ENCODE measurements at regions of chr11 and their contacts with region 1.

Region 1: GRCh38 chr11:86802601-86803051 is 2.3 kb downstream of the PRSS23 start:
- DNase-seq: peak in 1 of 2 donors; percentile 43
- ATAC-seq: peak in 2 of 3 donors; percentile 27 to 32
- H3K4me3 ChIP-seq: peak overlapping the region; percentile 75
- H3K4me3 Mint-ChIP-seq: peak overlapping the region; percentile 96
- H3K27ac ChIP-seq: peak overlapping the region; percentile 10
- H3K27ac Mint-ChIP-seq: peak overlapping the region; percentile 88 to 95
- H3K4me1 ChIP-seq: peaks cover 46% of the 10 kb centered on the region
- H3K4me1 Mint-ChIP-seq: peaks cover 71 to 74% of the 10 kb centered on the region in 2 donors
- H3K27me3 ChIP-seq: no peaks in the 10 kb centered on the region
- H3K27me3 Mint-ChIP-seq: no peaks in the 10 kb centered on the region
- CTCF ChIP-seq: peak; percentile 60

Region 2: DNA sequence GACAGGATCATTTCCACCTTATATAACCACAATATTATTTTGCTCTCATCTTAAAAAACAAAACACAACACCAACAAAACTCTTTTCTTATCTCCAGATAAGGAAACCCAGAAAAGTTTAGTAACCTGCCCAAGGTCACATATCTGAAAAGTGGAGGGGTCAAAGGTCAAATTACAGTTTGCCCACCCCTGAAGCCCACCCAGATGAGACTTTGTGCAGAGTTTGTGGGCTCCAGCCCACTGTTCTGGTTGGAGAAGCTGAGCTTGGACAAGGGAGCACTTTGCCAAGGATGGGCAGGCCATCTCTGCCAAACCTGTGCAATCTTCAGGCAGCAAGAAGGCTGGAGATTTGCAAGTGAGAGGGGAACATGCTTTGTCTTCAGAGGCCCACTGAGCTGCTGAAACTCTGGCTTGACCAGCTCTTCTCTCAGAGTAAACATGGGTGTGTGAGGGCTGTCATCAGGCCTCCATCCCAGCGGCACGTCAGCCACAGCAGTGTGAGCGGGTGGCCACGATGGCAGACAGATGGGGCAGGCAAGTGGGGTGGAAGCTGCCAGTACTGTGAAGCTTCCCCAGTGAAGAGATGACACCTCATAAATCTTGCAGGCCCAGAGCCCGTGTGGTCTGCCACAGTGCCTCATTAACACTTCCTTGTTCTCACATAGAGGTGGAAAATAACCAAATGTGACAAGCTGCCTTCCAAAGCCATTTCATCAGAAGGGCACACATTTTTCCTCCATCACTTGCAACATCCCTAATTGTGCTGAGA is 316.2 kb before region 1 on chr11:
- intact Hi-C with region 1: loop called (anchors 2 kb)
- DNase-seq: peak; percentile 66 to 70
- ATAC-seq: peak; percentile 93 to 98 (median 94)
- H3K4me3 ChIP-seq: no peak overlapping the region
- H3K4me3 Mint-ChIP-seq: peak overlapping the region; percentile 82
- H3K27ac ChIP-seq: peak overlapping the region; percentile 74
- H3K27ac Mint-ChIP-seq: peak overlapping the region; percentile 85 to 90
- H3K4me1 ChIP-seq: peaks cover 34% of the 10 kb centered on the region
- H3K4me1 Mint-ChIP-seq: peaks cover 49 to 65% of the 10 kb centered on the region in 2 donors
- H3K27me3 ChIP-seq: no peaks in the 10 kb centered on the region
- H3K27me3 Mint-ChIP-seq: peaks cover 42 to 45% of the 10 kb centered on the region in 2 donors
- CTCF ChIP-seq: no peak

Region 3: GRCh38 chr11:86608251-86608799 is 194.3 kb before region 1 on chr11:
- intact Hi-C with region 1: loop called (anchors 5 kb)
- DNase-seq: peak; percentile 31 to 61
- ATAC-seq: peak; percentile 85 to 94 (median 93)
- H3K4me3 ChIP-seq: no peak overlapping the region
- H3K4me3 Mint-ChIP-seq: peak overlapping the region; percentile 0
- H3K27ac ChIP-seq: no peak overlapping the region
- H3K27ac Mint-ChIP-seq: no peak overlapping the region
- H3K4me1 ChIP-seq: no peaks in the 10 kb centered on the region
- H3K4me1 Mint-ChIP-seq: peaks cover 12 to 13% of the 10 kb centered on the region in 2 donors
- H3K27me3 ChIP-seq: no peaks in the 10 kb centered on the region
- H3K27me3 Mint-ChIP-seq: peaks cover 0 to 9% of the 10 kb centered on the region in 2 donors
- CTCF ChIP-seq: peak; percentile 99

Region 4: DNA sequence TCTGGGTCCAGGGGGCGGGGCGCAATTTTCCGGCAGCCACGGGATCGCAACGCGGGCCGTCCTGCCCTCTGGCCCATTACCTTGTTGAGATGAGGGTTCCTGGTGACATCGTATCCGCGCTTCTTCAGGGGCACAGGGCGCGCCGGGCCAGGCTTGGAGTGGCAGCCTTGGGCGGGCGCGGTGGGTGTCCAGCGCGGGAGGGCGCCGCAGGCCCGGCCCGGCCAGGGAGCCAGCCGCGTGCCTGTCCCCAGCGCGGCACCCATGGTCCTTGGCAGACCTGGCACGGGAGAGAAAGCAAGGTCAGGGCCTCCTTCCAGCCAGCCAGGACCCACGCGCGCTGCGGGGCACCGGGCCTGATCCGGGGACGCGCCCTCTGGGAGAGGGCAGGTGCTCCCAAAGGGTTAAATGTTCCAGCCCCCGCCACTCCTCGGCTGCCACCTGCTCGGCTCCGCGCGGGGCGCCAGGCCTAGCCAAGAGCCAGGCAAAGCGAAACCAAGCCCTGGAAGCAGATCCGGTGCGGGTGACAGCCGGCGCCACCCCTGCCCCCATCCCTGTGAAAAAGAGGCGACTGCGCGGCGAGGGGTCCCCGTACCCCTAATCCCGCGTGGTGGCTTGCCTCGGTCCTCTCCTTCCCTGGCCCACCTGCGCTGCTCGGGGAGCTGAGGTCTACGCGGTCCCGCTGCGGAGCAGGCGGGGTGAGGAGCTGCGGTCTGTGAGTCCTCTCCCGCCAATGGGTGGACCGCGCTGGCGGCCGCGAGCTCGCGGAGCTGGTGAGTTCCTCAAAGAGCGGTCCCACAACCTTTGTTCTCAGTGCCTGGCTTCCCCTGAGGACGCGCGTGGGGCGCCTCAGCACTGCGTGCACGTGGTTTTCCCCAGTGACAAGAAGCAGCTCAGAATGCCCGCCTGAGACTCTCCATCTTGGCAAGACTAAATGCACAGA is 130.7 kb before region 1 on chr11 and contains the start of gene ME3:
- intact Hi-C with region 1: loop called (anchors 5 kb)
- DNase-seq: peak; percentile 49 to 69
- ATAC-seq: peak; percentile 82 to 88 (median 87)
- H3K4me3 ChIP-seq: peak within 1 kb of the TSS; percentile 71
- H3K4me3 Mint-ChIP-seq: peak within 1 kb of the TSS; percentile 86
- H3K27ac ChIP-seq: no peak within 1 kb of the TSS
- H3K27ac Mint-ChIP-seq: peak within 1 kb of the TSS in 1 of 2 donors; percentile 81
- H3K4me1 ChIP-seq: peaks cover 13% of the 10 kb centered on the region
- H3K4me1 Mint-ChIP-seq: peaks cover 12 to 16% of the 10 kb centered on the region in 2 donors
- H3K27me3 ChIP-seq: peaks cover 3% of the 10 kb centered on the region
- H3K27me3 Mint-ChIP-seq: peaks cover 11 to 19% of the 10 kb centered on the region in 2 donors
- CTCF ChIP-seq: no peak
- total RNA-seq, gene ME3: 5.2 to 7.5 (median 6.9) TPM

Measured in natural killer cell (primary cell).